IMR-90 (cell line): ENCODE measurements at regions of chr13 and their contacts with region 1.

Region 1: GRCh38 chr13:39433651-39434050 is 169.3 kb downstream of the LHFPL6 start:
- DNase-seq: no peak
- ATAC-seq: no peak
- H3K4me3 ChIP-seq: no peak overlapping the region
- H3K27ac ChIP-seq: no peak overlapping the region
- H3K4me1 ChIP-seq: no peaks in the 10 kb centered on the region
- H3K27me3 ChIP-seq: no peaks in the 10 kb centered on the region
- CTCF ChIP-seq: no peak
- POLR2A ChIP-seq: no peak
- RAD21 ChIP-seq: no peak

Region 2: GRCh38 chr13:39341251-39341650 is 92.4 kb before region 1 on chr13:
- CTCF ChIA-PET with region 1: no interaction called
- POLR2A ChIA-PET with region 1: no interaction called
- dilution Hi-C with region 1: no loop called
- in situ Hi-C with region 1: no loop called
- intact Hi-C with region 1: no loop called
- DNase-seq: no peak
- ATAC-seq: no peak
- H3K4me3 ChIP-seq: no peak overlapping the region
- H3K27ac ChIP-seq: no peak overlapping the region
- H3K4me1 ChIP-seq: no peaks in the 10 kb centered on the region
- H3K27me3 ChIP-seq: no peaks in the 10 kb centered on the region
- CTCF ChIP-seq: no peak
- POLR2A ChIP-seq: no peak
- RAD21 ChIP-seq: no peak

Region 3: DNA sequence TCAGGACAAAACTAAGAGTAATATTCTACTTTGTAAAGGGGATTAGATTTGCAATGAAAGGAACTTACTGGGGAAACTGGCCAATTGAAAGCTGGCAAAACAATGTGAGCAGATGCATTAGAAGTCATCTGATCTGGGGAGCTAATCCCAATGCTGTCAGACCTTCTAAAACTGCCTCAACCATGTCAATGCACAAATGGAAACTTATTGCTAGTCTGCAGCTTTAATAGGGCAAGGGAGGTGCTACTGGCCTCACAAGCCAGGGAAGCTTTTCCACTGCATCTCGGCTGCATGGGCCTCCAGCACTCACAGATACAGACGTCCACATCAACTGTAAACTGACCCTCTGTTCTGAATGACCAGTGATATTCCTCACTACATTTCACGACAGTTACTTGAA is 15.2 kb after region 1 on chr13:
- CTCF ChIA-PET with region 1: interaction called, 3 read pairs
- POLR2A ChIA-PET with region 1: no interaction called
- dilution Hi-C with region 1: no loop called
- in situ Hi-C with region 1: no loop called
- intact Hi-C with region 1: loop called (anchors 2 kb)
- DNase-seq: no peak
- ATAC-seq: no peak
- H3K4me3 ChIP-seq: no peak overlapping the region
- H3K27ac ChIP-seq: no peak overlapping the region
- H3K4me1 ChIP-seq: peaks cover 4% of the 10 kb centered on the region
- H3K27me3 ChIP-seq: no peaks in the 10 kb centered on the region
- CTCF ChIP-seq: no peak
- POLR2A ChIP-seq: no peak
- RAD21 ChIP-seq: no peak

Region 4: GRCh38 chr13:39474600-39474999 is 40.9 kb after region 1 on chr13:
- CTCF ChIA-PET with region 1: no interaction called
- POLR2A ChIA-PET with region 1: no interaction called
- dilution Hi-C with region 1: no loop called
- in situ Hi-C with region 1: no loop called
- intact Hi-C with region 1: loop called (anchors 1 kb)
- DNase-seq: no peak
- ATAC-seq: no peak; the same call in 1 of the 2 replicates
- H3K4me3 ChIP-seq: no peak overlapping the region
- H3K27ac ChIP-seq: no peak overlapping the region
- H3K4me1 ChIP-seq: no peaks in the 10 kb centered on the region; the same call in 1 of the 2 replicates
- H3K27me3 ChIP-seq: no peaks in the 10 kb centered on the region
- CTCF ChIP-seq: no peak
- POLR2A ChIP-seq: no peak
- RAD21 ChIP-seq: no peak